ENCODE measurements at regions of chr1 and their contacts with region 1.

Region 1: GRCh38 chr1:182614796-182615454 is 10.7 kb upstream of the RGS16 start:
- DNase-seq: peak; percentile 52
- ATAC-seq: peak; percentile 38
- H3K4me3 Mint-ChIP-seq: peak overlapping the region; percentile 61
- H3K27ac Mint-ChIP-seq: peak overlapping the region; percentile 85
- H3K4me1 Mint-ChIP-seq: peaks cover 56% of the 10 kb centered on the region
- H3K27me3 Mint-ChIP-seq: peaks cover 75% of the 10 kb centered on the region

Region 2: DNA sequence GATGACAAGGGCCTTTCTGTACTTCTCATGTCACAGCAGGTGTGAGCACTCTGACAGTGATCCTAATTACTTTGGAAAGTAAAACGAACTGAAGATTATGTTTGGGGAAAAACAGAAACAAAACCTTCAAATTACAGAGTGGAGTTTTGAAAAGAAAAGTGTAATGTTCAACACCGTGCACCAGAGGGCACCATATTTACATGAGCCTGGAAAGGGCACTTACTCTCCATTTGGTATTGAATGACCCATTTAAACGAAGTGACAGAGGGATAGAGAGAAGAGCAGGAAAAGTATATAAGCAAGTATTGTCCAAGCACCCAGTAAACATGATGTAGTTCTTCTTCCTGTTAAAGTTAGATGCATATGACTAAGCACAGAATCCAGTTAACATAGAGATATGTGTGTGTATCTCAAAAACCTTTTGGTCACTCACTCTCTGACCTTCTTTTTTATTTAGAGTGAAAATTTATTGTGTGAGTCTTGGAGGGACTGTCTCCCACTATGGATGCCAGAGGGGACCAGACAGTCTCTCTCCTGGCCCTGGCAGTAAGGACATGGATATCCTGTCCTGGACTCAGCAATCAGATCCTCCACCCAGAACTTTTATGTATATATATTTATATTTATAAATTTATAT is 168.8 kb before region 1 on chr1:
- CTCF ChIA-PET with region 1: no interaction called
- POLR2A ChIA-PET with region 1: no interaction called
- DNase-seq: peak; percentile 51
- ATAC-seq: peak; percentile 60
- H3K4me3 Mint-ChIP-seq: no peak overlapping the region
- H3K27ac Mint-ChIP-seq: no peak overlapping the region
- H3K4me1 Mint-ChIP-seq: no peaks in the 10 kb centered on the region
- H3K27me3 Mint-ChIP-seq: peaks cover 3% of the 10 kb centered on the region

Region 3: DNA sequence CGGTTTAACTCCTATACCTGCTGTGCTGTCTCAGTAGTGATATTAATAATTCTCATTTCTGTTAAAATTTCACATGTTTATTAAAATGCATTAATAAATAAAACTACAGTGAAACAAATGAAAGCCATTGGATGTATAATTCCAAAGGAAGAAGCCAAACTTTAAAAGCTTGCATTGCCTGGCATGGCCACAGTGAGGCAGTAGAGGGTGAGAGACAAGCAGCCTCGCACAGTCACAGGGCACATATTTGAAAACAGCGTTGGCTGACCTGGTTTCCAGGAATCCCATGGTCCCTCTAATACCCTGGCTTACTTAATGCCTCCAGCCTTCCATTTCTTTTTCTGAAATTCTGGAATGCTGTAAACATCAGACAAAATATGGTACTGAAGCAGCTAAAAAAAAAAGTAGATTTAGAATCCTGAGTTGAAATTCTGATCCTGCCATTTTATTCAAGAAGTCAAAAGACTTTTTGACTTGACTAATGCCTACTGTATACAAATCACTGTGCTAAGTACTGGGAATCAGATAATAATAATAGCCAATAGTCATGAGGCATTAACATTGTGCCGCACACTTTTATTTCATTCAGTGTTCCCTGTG is 19.2 kb before region 1 on chr1:
- CTCF ChIA-PET with region 1: interaction called, 44 read pairs
- POLR2A ChIA-PET with region 1: no interaction called
- DNase-seq: peak; percentile 72
- ATAC-seq: peak; percentile 37
- H3K4me3 Mint-ChIP-seq: no peak overlapping the region
- H3K27ac Mint-ChIP-seq: no peak overlapping the region
- H3K4me1 Mint-ChIP-seq: peaks cover 7% of the 10 kb centered on the region
- H3K27me3 Mint-ChIP-seq: peaks cover 8% of the 10 kb centered on the region

Region 4: GRCh38 chr1:182629499-182630096 is 14.7 kb after region 1 on chr1:
- CTCF ChIA-PET with region 1: interaction called, 17 read pairs
- POLR2A ChIA-PET with region 1: interaction called, 5 read pairs
- DNase-seq: peak; percentile 61
- ATAC-seq: peak; percentile 84
- H3K4me3 Mint-ChIP-seq: no peak overlapping the region
- H3K27ac Mint-ChIP-seq: no peak overlapping the region
- H3K4me1 Mint-ChIP-seq: peaks cover 54% of the 10 kb centered on the region
- H3K27me3 Mint-ChIP-seq: peaks cover 55% of the 10 kb centered on the region

Measured in activated CD8-positive, alpha-beta T cell treated with anti-CD3 and anti-CD28 coated beads, Interleukin-2, amount 10 ng/mL, durations not matched to agents 7 days and 5 days (primary cell).